ENCODE measurements at regions of chr17 and their contacts with region 1.

Region 1: DNA sequence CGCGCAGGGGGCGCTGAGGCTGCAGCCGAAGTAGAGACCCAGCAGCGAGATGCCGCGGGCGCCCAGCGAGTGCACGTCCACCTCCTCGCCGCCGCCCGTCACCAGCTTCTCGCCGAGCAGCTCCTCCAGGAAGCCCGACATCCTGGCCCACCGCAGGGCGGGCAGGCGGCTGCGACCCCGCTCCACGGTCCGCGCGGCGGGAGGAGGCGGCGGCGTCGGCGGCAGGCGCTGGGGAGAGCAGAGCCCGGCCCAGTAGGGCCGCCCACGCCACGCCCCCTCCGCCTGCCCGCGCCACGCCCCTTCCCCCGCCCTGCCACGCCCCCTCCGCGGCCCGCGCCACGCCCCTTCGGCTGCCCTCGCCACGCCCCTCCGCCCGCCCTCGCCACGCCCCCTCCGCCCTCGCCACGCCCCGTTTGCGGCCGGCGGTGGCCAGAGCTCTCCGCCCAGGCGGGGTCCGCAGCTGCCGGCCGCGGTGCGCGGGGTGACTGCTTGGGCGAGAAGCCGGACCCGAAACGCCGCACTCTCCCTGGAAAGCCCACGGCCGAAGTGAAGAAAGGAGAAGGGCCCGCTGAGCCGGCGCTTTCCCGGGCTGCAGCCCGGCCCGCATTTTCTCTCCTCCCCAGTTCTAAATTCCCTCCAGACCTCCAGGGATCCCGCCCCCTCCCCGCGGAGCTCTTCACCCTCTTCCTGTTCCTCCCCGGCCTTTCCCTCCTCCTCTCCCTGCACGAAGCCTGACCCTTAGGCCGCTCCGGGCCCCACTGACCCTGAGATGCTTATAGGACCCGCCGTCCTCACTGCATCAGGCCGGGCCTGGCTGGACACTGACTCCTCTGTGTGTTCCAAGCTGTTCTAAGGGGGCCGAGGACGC is at the start of gene NXN:
- DNase-seq: peak; percentile 61 to 96 (median 94)
- ATAC-seq: peak; percentile 93
- H3K4me3 ChIP-seq: peak within 1 kb of the TSS; percentile 37
- H3K27ac ChIP-seq: no peak within 1 kb of the TSS
- H3K4me1 ChIP-seq: peaks cover 0 to 25% of the 10 kb centered on the region in 2 experiments; a peak in 2 of 5 replicates
- H3K27me3 ChIP-seq: peaks cover 10 to 19% of the 10 kb centered on the region in 2 experiments; a peak in 4 of 5 replicates
- CTCF ChIP-seq: peak in 2 of 3 experiments; percentile 4 to 27; a peak in 1 of 6 replicates
- EP300 ChIP-seq: no peak
- POLR2A ChIP-seq: no peak
- RAD21 ChIP-seq: peak in 1 of 2 experiments; percentile 22; a peak in 2 of 4 replicates
- polyA plus RNA-seq, gene NXN: not detected

Region 2: DNA sequence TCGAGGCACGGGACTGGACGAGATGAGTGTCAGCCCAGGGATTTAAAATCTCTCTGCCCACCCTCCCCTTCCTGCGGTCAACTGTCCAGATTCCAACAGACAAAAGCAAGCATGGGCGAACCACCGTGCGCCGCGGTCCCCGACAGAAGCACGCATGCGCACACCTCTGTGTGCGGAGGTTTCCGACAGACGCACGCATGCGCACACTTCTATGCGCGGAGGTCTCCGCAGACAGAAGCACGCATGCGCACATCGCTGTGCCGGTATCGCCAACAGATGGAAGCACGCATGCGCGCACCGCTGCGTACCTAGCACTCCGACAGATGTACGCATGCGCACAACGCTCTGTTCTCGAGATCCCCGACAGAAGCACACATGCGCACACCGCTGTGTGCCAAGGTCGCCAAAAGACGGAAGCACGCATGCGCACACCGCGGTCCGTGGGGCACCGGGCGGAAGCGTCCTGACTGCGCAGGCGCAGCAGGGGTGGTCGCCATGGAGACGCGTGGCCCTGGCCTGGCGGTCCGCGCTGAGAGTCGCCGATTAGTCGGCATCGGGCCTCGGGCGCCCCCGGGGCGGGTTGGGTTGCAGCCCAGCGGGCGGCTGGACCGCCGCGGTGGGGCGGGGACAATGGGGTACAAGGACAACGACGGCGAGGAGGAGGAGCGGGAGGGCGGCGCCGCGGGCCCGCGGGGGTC is 569.8 kb before region 1 on chr17:
- CTCF ChIA-PET with region 1: no interaction called
- POLR2A ChIA-PET with region 1: no interaction called
- in situ Hi-C with region 1: no loop called
- intact Hi-C with region 1: loop called (anchors 5 kb)
- DNase-seq: peak; percentile 97 to 98 (median 98)
- ATAC-seq: peak; percentile 92
- H3K4me3 ChIP-seq: peak overlapping the region; percentile 56
- H3K27ac ChIP-seq: no peak overlapping the region
- H3K4me1 ChIP-seq: peaks cover 7 to 17% of the 10 kb centered on the region in 2 experiments; a peak in 4 of 5 replicates
- H3K27me3 ChIP-seq: peaks cover 0 to 8% of the 10 kb centered on the region in 2 experiments; a peak in 1 of 5 replicates
- CTCF ChIP-seq: no peak
- EP300 ChIP-seq: no peak
- POLR2A ChIP-seq: peak; percentile 51
- RAD21 ChIP-seq: no peak

Region 3: DNA sequence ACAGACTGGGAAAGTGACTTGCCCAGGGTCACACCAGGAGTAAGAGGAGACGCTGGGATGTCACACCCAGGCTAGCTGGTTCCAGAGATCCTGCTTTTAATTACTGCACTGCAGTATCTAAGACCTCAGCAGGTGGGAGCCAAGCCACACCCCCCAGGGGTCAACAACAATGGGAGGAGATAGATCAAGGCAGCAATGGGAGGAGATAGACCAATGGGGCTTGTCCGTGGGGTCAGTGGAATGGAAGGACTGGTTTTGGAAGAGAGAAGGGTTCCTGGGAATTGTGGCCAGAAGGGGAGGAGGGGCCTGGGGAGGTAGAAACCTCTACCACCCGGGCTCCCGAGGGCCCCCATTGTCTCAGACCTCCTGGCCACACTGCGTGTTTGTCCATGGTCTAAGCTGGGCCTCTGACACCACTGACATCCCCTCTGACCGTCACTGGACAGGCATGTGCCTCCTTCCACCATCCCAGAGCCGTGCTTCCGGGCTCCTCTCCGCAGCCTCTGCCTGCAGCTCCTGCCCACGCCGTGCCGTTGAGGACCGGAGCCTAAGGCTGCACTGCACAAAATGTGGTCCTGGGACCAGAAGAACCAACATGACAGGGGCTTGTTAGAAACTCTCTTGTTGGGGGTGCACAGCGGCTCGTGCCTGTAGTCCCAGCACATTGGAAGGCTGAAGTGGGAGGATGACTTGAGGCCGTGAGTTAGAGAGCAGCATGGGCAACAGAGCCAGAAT is 557.4 kb before region 1 on chr17:
- CTCF ChIA-PET with region 1: no interaction called
- POLR2A ChIA-PET with region 1: no interaction called
- in situ Hi-C with region 1: loop called (anchors 10 kb)
- intact Hi-C with region 1: no loop called
- DNase-seq: no peak
- ATAC-seq: no peak
- H3K4me3 ChIP-seq: no peak overlapping the region
- H3K27ac ChIP-seq: no peak overlapping the region
- H3K4me1 ChIP-seq: peaks cover 0 to 4% of the 10 kb centered on the region in 2 experiments; a peak in 3 of 5 replicates
- H3K27me3 ChIP-seq: peaks cover 2 to 42% of the 10 kb centered on the region in 2 experiments; a peak in 2 of 5 replicates
- CTCF ChIP-seq: no peak
- EP300 ChIP-seq: no peak
- POLR2A ChIP-seq: no peak
- RAD21 ChIP-seq: no peak

Region 4: GRCh38 chr17:794876-795275 is 184.9 kb before region 1 on chr17:
- CTCF ChIA-PET with region 1: interaction called, 16 read pairs
- POLR2A ChIA-PET with region 1: no interaction called
- in situ Hi-C with region 1: no loop called
- intact Hi-C with region 1: loop called (anchors 2 kb)
- DNase-seq: peak; percentile 54 to 65 (median 61)
- ATAC-seq: peak; percentile 93
- H3K4me3 ChIP-seq: no peak overlapping the region
- H3K27ac ChIP-seq: no peak overlapping the region
- H3K4me1 ChIP-seq: peaks cover 0 to 3% of the 10 kb centered on the region in 2 experiments; a peak in 1 of 5 replicates
- H3K27me3 ChIP-seq: peaks cover 6 to 20% of the 10 kb centered on the region in 2 experiments; a peak in 4 of 5 replicates
- CTCF ChIP-seq: peak; percentile 76 to 81 (median 77)
- EP300 ChIP-seq: no peak
- POLR2A ChIP-seq: no peak
- RAD21 ChIP-seq: peak; percentile 68 to 85

Region 5: DNA sequence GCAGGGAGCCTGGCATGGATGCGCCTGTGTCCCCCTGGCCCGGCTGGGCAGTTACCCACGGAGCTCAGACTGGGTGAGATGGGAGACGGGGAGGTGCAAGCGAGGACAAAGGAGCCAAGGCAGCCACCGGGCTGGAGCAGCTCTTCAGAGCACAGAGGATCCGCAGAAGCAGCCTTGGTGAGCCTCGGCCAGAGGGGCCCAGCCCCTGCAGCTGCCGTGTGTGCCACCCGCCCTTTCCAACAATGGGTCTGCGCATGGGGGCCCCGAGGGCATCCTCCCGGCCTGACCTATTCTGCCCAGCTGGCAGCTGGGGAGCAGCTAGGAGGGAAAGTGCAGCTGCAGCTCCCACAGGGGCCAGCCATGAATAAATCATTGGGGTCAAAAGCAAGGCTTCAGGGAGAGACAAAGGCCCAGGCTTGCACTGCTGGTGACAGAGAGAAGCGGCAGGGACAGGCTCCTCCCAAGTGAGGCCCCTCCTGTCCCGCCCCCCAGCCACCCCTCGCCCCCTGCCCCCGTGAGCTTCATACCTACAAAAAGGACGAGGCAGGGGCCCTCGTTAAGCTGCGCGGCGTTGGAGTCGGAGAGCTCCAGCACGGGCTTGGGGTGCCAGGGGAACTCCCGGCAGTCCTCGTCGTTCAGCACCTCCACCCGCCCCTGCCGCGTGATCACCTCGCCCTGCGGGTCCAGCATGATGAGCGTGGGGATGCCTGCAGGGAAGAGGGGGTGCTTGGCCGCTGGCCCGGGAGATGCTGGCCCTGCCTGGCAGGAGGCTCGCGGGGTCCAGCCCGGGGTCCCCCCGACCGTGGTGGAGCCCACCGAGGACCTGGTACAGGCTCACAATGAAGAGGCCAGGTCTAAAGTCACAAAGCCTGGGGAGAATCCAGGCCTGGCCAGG is 175.0 kb before region 1 on chr17:
- CTCF ChIA-PET with region 1: no interaction called
- POLR2A ChIA-PET with region 1: no interaction called
- in situ Hi-C with region 1: no loop called
- intact Hi-C with region 1: loop called (anchors 5 kb)
- DNase-seq: no peak
- ATAC-seq: no peak
- H3K4me3 ChIP-seq: no peak overlapping the region
- H3K27ac ChIP-seq: no peak overlapping the region
- H3K4me1 ChIP-seq: peaks cover 0 to 4% of the 10 kb centered on the region in 2 experiments; a peak in 2 of 5 replicates
- H3K27me3 ChIP-seq: peaks cover 24 to 64% of the 10 kb centered on the region in 2 experiments
- CTCF ChIP-seq: no peak
- EP300 ChIP-seq: no peak
- POLR2A ChIP-seq: no peak
- RAD21 ChIP-seq: no peak

Region 6: DNA sequence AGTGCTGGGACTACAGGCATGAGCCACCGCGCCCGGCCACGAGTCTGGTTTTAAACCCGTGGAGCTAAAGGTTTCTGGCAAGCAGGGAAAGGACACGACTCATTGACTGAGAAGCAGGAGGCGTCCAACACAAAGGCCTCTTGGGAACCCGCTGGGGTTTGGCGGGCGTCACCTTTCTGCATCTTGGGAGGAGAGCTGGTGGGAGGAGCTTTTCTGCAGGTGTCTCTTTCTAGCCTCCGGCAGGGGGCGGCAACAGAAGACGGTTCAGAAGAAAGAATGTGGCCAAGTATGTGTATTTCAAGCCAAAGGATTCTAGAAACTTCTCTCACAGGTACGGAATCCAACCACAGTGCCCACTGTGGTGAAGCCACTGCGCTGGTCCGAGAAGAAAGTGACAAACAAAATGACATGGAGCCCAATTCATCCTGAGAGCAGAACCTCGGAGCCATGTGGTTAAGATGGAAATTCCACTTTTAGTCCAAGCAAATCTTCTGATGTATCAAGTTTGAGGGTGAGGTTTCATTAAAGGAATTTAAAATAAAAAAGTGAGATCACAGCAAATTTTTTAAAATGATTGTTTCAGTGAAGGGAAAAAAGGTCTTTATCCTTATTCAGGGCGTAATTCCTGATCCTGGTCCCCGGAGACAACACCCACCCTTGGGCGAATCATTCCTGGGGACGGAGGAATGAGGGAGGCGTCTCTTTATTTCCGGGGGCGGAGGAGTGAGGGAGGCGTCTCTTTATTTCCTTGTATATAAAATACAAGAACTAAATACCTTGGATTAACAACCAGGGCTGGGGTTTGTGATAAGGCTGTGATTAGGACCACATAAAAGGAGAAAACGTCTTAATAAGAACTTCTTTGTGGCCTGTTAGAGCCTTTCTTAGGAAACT is 100.0 kb before region 1 on chr17:
- CTCF ChIA-PET with region 1: interaction called, 3 read pairs
- POLR2A ChIA-PET with region 1: no interaction called
- in situ Hi-C with region 1: loop called (anchors 10 kb)
- intact Hi-C with region 1: loop called (anchors 5 kb)
- DNase-seq: peak; percentile 58 to 76 (median 61)
- ATAC-seq: peak; percentile 88
- H3K4me3 ChIP-seq: no peak overlapping the region
- H3K27ac ChIP-seq: no peak overlapping the region
- H3K4me1 ChIP-seq: no peaks in the 10 kb centered on the region; a peak in 1 of 5 replicates
- H3K27me3 ChIP-seq: peaks cover 3 to 5% of the 10 kb centered on the region in 2 experiments; a peak in 4 of 5 replicates
- CTCF ChIP-seq: peak; percentile 59 to 64 (median 62); a peak in 5 of 6 replicates
- EP300 ChIP-seq: no peak
- POLR2A ChIP-seq: no peak
- RAD21 ChIP-seq: peak in 1 of 2 experiments; percentile 58; a peak in 3 of 4 replicates

Region 7: GRCh38 chr17:1008008-1008815 is 28.4 kb after region 1 on chr17:
- CTCF ChIA-PET with region 1: no interaction called
- POLR2A ChIA-PET with region 1: no interaction called
- in situ Hi-C with region 1: no loop called
- intact Hi-C with region 1: no loop called
- DNase-seq: no peak
- ATAC-seq: no peak
- H3K4me3 ChIP-seq: no peak overlapping the region
- H3K27ac ChIP-seq: no peak overlapping the region
- H3K4me1 ChIP-seq: peaks cover 0 to 45% of the 10 kb centered on the region in 2 experiments; a peak in 2 of 5 replicates
- H3K27me3 ChIP-seq: peaks cover 0 to 29% of the 10 kb centered on the region in 2 experiments; a peak in 2 of 5 replicates
- CTCF ChIP-seq: no peak
- EP300 ChIP-seq: no peak
- POLR2A ChIP-seq: no peak
- RAD21 ChIP-seq: no peak